ENCODE measurements at regions of chr6 and their contacts with region 1.

Region 1: GRCh38 chr6:169503422-169504152 is 198.2 kb downstream of the WDR27 start:
- DNase-seq: no peak
- ATAC-seq: no peak
- H3K4me3 ChIP-seq: no peak overlapping the region
- H3K27ac ChIP-seq: no peak overlapping the region
- H3K4me1 ChIP-seq: peaks cover 0 to 5% (median 0%) of the 10 kb centered on the region in 9 donors
- H3K27me3 ChIP-seq: no peaks in the 10 kb centered on the region
- CTCF ChIP-seq: no peak

Region 2: GRCh38 chr6:169363590-169363989 is 140.0 kb before region 1 on chr6:
- intact Hi-C with region 1: no loop called
- DNase-seq: no peak
- ATAC-seq: no peak
- H3K4me3 ChIP-seq: no peak overlapping the region
- H3K27ac ChIP-seq: no peak overlapping the region
- H3K4me1 ChIP-seq: no peaks in the 10 kb centered on the region
- H3K27me3 ChIP-seq: no peaks in the 10 kb centered on the region
- CTCF ChIP-seq: no peak

Region 3: DNA sequence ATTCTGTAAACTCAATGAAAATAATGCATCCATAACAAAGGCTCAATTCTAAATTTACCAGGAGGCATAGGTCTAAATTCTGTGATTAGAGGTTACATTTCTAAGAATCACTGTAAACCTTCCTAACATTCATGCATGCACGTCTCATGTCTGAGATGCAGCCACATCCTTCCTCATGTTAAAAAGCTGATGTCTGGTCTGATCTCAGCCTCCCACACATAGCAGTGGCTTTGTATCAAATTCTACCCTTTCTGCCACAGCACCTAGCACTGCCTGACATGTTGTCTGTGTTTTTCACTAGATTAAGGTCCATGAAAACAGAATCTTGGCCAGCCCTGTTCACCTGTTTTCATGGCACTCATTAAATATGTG is 27.2 kb after region 1 on chr6:
- intact Hi-C with region 1: no loop called
- DNase-seq: no peak
- ATAC-seq: no peak
- H3K4me3 ChIP-seq: no peak overlapping the region
- H3K27ac ChIP-seq: no peak overlapping the region
- H3K4me1 ChIP-seq: peaks cover 0 to 13% (median 4%) of the 10 kb centered on the region in 9 donors
- H3K27me3 ChIP-seq: no peaks in the 10 kb centered on the region
- CTCF ChIP-seq: no peak

Region 4: DNA sequence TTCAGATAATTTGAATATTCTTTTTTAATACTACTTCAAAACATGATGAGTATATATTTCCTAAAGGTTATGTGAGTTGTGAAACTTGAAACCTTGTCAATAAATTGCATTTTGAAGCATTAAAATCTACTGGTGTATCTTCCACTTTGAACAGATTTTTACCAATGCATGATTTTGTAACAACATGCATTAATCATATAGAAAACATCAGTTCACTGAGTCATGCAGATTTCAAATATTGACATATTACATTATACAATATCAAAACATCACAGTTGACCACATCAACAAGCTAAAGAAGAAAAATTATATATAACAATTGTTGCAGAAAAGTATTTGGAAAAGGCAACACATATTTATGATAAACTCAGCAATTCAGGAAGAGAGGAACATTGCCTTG is 40.1 kb after region 1 on chr6:
- intact Hi-C with region 1: loop called in 1 of 10 experiments (anchors 1 kb)
- DNase-seq: no peak
- ATAC-seq: no peak
- H3K4me3 ChIP-seq: no peak overlapping the region
- H3K27ac ChIP-seq: no peak overlapping the region
- H3K4me1 ChIP-seq: peaks cover 0 to 11% (median 5%) of the 10 kb centered on the region in 9 donors
- H3K27me3 ChIP-seq: no peaks in the 10 kb centered on the region
- CTCF ChIP-seq: no peak